ENCODE measurements at regions of chr5 and their contacts with region 1.

Region 1: DNA sequence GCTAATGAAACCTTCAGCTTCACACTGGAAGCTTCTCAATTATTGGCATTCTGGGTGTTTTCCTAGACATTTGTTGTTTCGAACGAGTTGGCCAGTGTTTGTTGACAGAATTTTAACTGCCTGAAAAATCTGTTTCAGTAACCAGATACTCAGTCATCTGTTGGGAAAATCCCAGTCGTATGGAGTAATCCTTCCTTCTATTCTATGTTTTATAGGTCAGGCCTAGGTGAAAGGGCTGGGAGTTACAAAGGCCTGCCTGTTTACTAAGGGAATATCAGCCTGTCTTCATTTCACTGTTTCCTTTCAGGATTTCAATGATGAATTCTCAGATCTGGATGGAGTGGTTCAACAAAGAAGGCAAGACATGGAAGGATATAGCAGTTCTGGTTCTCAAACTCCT is 59.9 kb downstream of the GRAMD2B start:
- DNase-seq: no peak
- H3K4me3 Mint-ChIP-seq: no peak overlapping the region
- H3K27ac Mint-ChIP-seq: no peak overlapping the region
- H3K4me1 Mint-ChIP-seq: peaks cover 6% of the 10 kb centered on the region
- H3K27me3 Mint-ChIP-seq: no peaks in the 10 kb centered on the region
- CTCF ChIP-seq: no peak

Region 2: GRCh38 chr5:126422989-126423788 is 60.0 kb before region 1 on chr5 and contains the start of gene GRAMD2B:
- CTCF ChIA-PET with region 1: no interaction called
- intact Hi-C with region 1: loop called (anchors 5 kb)
- DNase-seq: peak; percentile 85
- H3K4me3 Mint-ChIP-seq: peak within 1 kb of the TSS; percentile 93
- H3K27ac Mint-ChIP-seq: peak within 1 kb of the TSS; percentile 81
- H3K4me1 Mint-ChIP-seq: peaks cover 13% of the 10 kb centered on the region
- H3K27me3 Mint-ChIP-seq: no peaks in the 10 kb centered on the region
- CTCF ChIP-seq: no peak
- total RNA-seq, gene GRAMD2B: 23.0 and 23.3 TPM in 2 replicates

Region 3: DNA sequence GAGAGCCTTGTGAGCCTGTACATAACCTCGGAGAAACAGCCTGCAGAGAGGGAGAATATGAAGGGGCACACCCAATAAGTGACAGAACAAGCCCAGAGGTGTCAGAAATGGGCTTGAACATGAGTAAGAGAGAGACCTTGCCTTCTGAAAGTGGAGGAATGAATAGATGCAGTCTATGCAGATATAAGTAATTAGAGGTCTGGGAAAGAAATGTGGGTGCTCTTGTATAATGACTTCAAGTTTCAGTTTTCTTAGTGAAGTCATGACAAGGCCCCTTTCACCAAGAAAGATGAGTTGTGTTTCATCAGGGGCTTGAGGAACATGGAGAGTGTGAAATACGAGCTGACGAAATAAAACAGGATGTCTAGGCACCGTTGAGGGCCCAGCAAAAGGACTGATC is 44.9 kb before region 1 on chr5:
- CTCF ChIA-PET with region 1: no interaction called
- intact Hi-C with region 1: no loop called
- DNase-seq: no peak
- H3K4me3 Mint-ChIP-seq: no peak overlapping the region
- H3K27ac Mint-ChIP-seq: no peak overlapping the region
- H3K4me1 Mint-ChIP-seq: peaks cover 9% of the 10 kb centered on the region
- H3K27me3 Mint-ChIP-seq: no peaks in the 10 kb centered on the region
- CTCF ChIP-seq: no peak

Measured in Calu3 (cell line).